ENCODE measurements at regions of chr7 and their contacts with region 1.

Region 1: DNA sequence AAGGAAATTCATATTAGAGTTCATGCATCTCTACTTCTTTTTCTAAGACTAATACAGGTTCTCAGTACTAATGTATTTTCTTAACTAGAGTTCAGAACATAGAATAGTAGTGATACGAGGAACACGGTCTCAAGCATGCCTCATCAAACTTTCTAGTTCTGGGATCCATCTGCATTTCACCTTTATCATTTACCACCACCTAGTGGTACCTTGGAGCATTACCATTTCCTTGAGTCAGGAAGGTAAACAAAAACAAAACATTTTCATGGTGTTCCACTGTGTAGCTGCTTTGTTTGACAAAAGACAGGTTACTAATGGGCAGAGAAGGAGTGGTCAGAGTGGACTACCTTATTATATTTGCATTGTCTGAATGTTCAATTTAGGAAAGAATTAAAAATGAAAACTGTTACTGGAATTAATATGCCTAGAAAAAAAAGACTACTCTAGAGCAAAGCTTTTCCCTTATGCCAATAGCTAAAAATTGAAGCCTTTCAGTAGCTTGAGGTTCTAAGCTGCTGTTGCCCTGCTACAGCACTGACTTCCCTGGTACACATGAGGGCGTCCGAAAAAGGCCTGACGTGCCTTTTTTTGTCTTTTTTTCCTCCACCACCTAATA is 44.5 kb downstream of the STARD3NL start:
- DNase-seq: peak; percentile 55
- CTCF ChIP-seq: peak; percentile 76

Region 2: DNA sequence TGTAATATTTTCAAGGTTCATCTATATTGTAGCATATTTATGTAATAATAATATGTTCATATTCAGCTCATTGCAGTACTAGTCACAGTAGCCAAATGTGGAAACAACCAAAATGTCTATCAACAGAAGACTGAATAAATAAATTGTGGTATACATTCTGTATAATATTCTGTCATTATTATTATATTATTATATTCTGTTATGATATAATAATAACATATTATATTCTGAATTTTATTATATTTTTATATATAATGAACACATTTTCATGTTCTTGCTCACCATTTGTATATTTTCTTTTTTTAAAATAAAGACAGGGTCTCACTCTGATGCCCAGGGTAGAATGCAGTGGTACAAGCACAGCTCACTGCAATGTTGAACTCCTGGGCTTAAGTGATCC is 135.7 kb before region 1 on chr7:
- CTCF ChIA-PET with region 1: no interaction called
- POLR2A ChIA-PET with region 1: no interaction called
- DNase-seq: no peak
- CTCF ChIP-seq: no peak

Region 3: GRCh38 chr7:38107486-38107893 is 115.1 kb before region 1 on chr7:
- CTCF ChIA-PET with region 1: interaction called, 102 read pairs
- POLR2A ChIA-PET with region 1: no interaction called
- DNase-seq: peak; percentile 55
- CTCF ChIP-seq: peak; percentile 73

Region 4: GRCh38 chr7:38195804-38196595 is 26.6 kb before region 1 on chr7:
- CTCF ChIA-PET with region 1: interaction called, 13 read pairs
- POLR2A ChIA-PET with region 1: no interaction called
- DNase-seq: no peak
- CTCF ChIP-seq: no peak

Region 5: DNA sequence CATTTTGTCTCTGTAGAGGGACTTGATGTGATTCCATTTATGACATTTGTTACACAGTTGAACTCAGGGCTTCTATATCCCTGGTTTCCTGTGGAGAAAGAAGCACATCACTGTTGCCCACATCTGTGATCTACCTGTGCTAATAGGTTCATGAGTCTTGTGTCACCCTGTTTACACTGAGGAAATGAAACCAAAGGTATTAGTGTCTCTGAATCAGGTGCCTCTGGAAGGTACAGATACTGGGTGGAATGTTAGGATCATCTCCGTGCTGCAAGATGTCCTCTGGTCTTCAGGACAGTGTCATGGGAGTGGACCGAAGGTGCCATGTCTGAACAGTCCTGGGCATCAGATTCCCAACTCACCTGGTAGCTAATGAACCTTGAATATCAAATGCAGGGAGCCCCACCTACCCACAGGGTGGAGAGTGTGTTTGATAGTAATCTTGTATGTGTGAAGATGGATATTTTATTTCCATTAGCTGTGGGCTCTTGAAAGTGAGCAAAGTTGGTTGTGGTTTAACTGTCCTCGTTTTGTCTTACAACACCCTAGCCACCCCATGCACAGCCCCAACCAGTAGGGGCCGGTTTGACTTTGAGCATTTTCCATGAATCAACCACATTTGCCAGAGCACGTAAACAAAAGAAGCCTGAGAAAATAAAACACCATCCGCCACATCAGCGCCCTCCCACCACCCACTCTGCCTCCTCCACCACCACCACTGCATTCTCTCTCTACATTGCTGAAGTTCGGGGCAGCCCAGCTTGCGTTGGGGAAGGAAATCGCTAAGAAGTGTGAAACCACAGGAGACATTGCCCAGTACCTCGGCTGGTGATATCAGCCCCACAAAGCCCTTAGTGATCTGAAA is 10.1 kb after region 1 on chr7:
- CTCF ChIA-PET with region 1: interaction called, 73 read pairs
- POLR2A ChIA-PET with region 1: no interaction called
- DNase-seq: peak; percentile 69
- CTCF ChIP-seq: no peak

Region 6: DNA sequence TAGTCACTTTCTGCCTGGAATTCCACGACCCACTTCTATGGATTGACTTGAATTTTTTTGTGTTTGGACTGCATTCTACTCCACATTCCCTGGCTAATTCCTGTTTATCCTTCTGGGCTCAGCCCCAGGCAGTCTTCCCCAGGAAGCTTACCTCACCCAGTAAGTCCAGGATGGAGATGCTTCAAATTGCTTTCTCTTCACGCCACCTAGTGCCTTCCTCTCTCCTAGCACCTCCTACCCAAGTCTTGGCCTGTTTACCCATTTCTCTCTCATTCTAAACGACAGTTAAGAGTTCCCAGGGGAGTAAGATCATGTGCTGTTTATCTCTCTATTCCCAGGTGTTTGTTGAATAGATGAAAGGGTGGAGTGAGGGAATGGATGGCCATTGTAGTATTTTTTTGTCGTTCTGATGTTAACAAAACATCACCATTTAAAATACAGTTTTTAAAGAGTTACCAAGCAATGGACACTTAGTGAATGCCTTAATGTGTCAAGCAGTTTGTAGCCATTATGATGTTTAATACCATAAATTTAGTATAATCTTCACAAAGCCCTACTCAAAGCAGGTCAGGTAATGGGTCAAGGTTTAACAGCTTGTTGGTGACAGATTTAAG is 96.3 kb after region 1 on chr7:
- CTCF ChIA-PET with region 1: interaction called, 16 read pairs
- POLR2A ChIA-PET with region 1: no interaction called
- DNase-seq: peak; percentile 68
- CTCF ChIP-seq: peak; percentile 61

Region 7: DNA sequence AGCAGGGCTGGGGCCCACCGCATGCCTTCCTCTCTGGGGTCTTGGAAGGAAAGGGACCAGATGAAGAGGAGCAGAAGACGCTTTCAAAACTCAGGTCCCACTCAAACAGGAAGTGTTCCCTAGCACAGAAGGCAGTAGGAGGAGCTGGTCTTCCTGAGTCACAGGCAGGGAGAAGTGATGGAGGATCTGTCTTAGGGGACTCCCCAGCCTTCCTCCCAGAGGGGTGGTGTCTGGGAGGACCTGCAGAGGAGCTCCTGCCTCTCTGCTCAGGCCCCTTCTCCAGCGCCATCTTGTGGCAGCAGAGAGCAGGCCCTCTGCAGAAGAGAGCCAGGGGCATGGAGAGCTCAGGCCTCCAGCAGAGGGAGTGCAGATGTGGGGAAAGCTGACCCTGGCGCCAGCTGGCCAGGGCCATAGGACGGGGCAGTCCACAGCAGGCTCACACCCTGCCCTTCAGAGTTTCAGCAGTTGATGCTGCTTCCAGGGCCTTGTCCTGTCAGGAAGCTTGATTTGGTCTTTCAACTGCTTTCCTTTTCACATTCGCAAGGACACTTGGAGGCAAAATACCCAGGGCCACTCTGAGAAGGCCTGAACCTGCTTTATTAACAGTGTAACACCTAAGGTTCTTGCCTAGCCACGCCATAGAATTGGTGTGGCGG is 113.0 kb after region 1 on chr7:
- CTCF ChIA-PET with region 1: interaction called, 81 read pairs
- POLR2A ChIA-PET with region 1: no interaction called
- DNase-seq: peak; percentile 84
- CTCF ChIP-seq: peak; percentile 100

Measured in GM10248 (cell line).